CD8-positive, alpha-beta memory T cell (primary cell): ENCODE measurements at regions of chr3 and their contacts with region 1.

Region 1: GRCh38 chr3:37986479-37987314 is 3.9 kb upstream of the VILL start:
- DNase-seq: no peak
- H3K4me3 ChIP-seq: no peak overlapping the region
- H3K4me3 Mint-ChIP-seq: no peak overlapping the region
- H3K27ac ChIP-seq: peak overlapping the region; percentile 64
- H3K27ac Mint-ChIP-seq: no peak overlapping the region
- H3K4me1 ChIP-seq: no peaks in the 10 kb centered on the region
- H3K4me1 Mint-ChIP-seq: peaks cover 0 to 5% (median 0%) of the 10 kb centered on the region in 3 donors
- H3K27me3 ChIP-seq: no peaks in the 10 kb centered on the region
- H3K27me3 Mint-ChIP-seq: no peaks in the 10 kb centered on the region

Region 2: GRCh38 chr3:37956723-37957528 is 29.8 kb before region 1 on chr3:
- CTCF ChIA-PET with region 1: no interaction called
- POLR2A ChIA-PET with region 1: no interaction called
- DNase-seq: peak in 1 of 5 donors; percentile 12
- H3K4me3 ChIP-seq: peak overlapping the region; percentile 25
- H3K4me3 Mint-ChIP-seq: peak overlapping the region in 1 of 7 donors; percentile 8
- H3K27ac ChIP-seq: no peak overlapping the region
- H3K27ac Mint-ChIP-seq: peak overlapping the region in 7 of 8 donors; percentile 18 to 88 (median 77)
- H3K4me1 ChIP-seq: peaks cover 25% of the 10 kb centered on the region
- H3K4me1 Mint-ChIP-seq: peaks cover 9 to 12% (median 11%) of the 10 kb centered on the region in 3 donors
- H3K27me3 ChIP-seq: no peaks in the 10 kb centered on the region
- H3K27me3 Mint-ChIP-seq: no peaks in the 10 kb centered on the region

Region 3: DNA sequence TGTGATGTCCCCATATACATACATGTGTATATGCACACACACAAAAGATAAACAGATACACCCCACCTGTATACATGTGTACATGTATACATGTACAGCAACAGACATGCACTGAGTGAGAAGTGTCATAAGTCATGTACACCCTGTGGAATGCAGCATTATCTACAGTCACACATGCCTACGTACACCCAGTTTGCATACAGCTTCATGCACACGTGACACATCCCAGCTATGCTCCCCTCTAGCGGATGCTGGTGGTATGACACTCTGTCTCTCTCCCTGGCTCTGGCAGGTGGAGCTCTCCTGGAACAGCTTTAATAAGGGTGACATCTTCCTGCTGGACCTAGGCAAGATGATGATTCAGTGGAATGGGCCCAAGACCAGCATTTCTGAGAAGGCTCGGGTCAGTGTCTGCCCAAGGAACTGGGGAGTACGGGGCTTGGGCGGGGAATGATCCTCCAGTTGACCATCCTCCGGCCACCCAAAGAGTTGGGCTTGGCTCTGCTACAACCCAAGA is 10.1 kb after region 1 on chr3:
- CTCF ChIA-PET with region 1: interaction called, 13 read pairs
- POLR2A ChIA-PET with region 1: no interaction called
- DNase-seq: peak; percentile 66 to 86 (median 75)
- H3K4me3 ChIP-seq: no peak overlapping the region
- H3K4me3 Mint-ChIP-seq: peak overlapping the region; percentile 30 to 79 (median 50)
- H3K27ac ChIP-seq: no peak overlapping the region
- H3K27ac Mint-ChIP-seq: peak overlapping the region; percentile 61 to 98 (median 94)
- H3K4me1 ChIP-seq: peaks cover 54% of the 10 kb centered on the region
- H3K4me1 Mint-ChIP-seq: peaks cover 54 to 70% (median 64%) of the 10 kb centered on the region in 3 donors
- H3K27me3 ChIP-seq: no peaks in the 10 kb centered on the region
- H3K27me3 Mint-ChIP-seq: peaks cover 0 to 1% of the 10 kb centered on the region in 2 donors

Region 4: GRCh38 chr3:38009807-38010591 is 23.3 kb after region 1 on chr3:
- CTCF ChIA-PET with region 1: no interaction called
- POLR2A ChIA-PET with region 1: no interaction called
- DNase-seq: no peak
- H3K4me3 ChIP-seq: no peak overlapping the region
- H3K4me3 Mint-ChIP-seq: no peak overlapping the region
- H3K27ac ChIP-seq: no peak overlapping the region
- H3K27ac Mint-ChIP-seq: peak overlapping the region in 3 of 8 donors; percentile 10 to 60 (median 43)
- H3K4me1 ChIP-seq: no peaks in the 10 kb centered on the region
- H3K4me1 Mint-ChIP-seq: peaks cover 2 to 5% (median 4%) of the 10 kb centered on the region in 3 donors
- H3K27me3 ChIP-seq: no peaks in the 10 kb centered on the region
- H3K27me3 Mint-ChIP-seq: no peaks in the 10 kb centered on the region